ENCODE measurements at regions of chr15 and their contacts with region 1.

Region 1: DNA sequence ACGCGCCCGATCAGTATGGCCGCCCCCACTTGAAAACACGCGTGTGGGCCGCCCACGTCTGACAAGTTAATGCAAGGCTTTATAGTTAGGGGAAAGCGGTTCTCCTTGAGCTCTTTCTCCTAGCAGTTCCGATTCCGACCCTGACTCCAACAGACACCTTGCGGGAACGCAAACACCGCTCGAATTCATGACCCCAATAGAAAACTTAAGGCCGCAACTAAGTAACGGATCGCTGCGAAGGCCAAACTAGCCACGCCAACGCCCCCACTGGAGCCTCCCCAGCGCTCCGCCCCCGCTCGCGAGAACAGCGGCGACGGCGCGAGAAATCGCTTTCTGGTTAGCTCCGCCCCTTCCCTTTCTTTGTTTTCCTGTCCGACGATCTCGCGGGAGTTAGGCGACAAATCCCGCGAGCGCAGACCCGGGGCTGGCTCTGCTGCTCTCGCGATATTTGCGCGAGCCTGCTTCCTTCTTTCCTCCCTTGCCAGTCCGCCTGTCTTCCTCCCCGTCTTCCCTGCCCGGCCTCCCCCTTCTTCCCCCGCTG is at the start of gene IREB2:
- DNase-seq: peak; percentile 95 to 97
- H3K4me3 ChIP-seq: peak within 1 kb of the TSS; percentile 99
- H3K4me3 Mint-ChIP-seq: peak within 1 kb of the TSS; percentile 76
- H3K27ac Mint-ChIP-seq: peak within 1 kb of the TSS; percentile 4
- H3K4me1 ChIP-seq: peaks cover 18% of the 10 kb centered on the region
- H3K4me1 Mint-ChIP-seq: no peaks in the 10 kb centered on the region
- H3K27me3 ChIP-seq: no peaks in the 10 kb centered on the region
- H3K27me3 Mint-ChIP-seq: no peaks in the 10 kb centered on the region
- CTCF ChIP-seq: no peak
- total RNA-seq, gene IREB2: 77.6 and 82.9 TPM in 2 replicates

Region 2: DNA sequence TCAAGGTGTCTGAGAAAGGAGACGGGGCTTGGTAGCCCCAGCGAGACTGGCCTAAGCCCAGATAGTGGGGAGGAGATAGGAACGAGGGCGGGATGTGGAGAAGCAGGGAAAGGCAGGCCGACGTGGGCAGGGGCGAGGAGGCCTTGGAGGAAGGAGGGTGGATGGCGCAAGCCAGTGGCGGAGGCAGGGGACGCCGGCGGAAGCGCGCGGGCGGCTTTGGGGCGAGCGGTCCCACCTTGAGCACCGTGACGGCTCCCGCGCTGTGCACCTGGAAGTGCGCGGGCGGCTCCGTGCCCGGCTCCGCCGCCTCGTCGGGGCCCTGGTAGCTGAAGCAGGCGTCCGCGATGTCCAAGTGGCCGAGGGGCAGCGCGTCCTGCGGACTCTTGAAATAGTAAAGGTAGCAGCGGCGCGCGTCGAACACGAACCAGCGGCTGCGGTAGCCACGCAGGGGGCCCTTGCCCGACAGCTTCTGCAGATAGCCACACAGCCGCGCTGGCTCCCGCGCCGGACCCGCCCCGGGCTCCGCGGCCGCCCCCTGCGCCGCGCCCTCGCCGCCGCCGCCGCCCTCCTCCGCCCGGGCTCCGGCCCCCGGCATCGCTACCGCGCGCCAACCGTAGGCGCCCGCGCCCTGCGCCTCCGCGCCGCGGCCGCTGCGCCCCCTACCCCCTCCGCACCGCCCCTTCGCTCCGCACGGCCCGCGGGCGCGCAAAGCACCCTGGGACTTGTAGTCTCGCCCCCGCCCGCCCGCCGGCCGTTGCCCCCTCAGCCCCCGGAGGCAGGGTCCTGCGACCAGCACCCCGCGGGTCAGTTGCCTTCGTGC is 360.6 kb before region 1 on chr15 and contains the start of gene TBC1D2B:
- CTCF ChIA-PET with region 1: no interaction called
- POLR2A ChIA-PET with region 1: no interaction called
- intact Hi-C with region 1: no loop called
- DNase-seq: peak; percentile 57 to 72
- H3K4me3 ChIP-seq: peak within 1 kb of the TSS; percentile 82
- H3K4me3 Mint-ChIP-seq: peak within 1 kb of the TSS; percentile 89
- H3K27ac Mint-ChIP-seq: peak within 1 kb of the TSS; percentile 85
- H3K4me1 ChIP-seq: peaks cover 9% of the 10 kb centered on the region; the same call in 1 of the 2 replicates
- H3K4me1 Mint-ChIP-seq: peaks cover 8% of the 10 kb centered on the region
- H3K27me3 ChIP-seq: no peaks in the 10 kb centered on the region
- H3K27me3 Mint-ChIP-seq: no peaks in the 10 kb centered on the region
- CTCF ChIP-seq: no peak
- total RNA-seq, gene TBC1D2B: 18.3 and 19.1 TPM in 2 replicates

Region 3: DNA sequence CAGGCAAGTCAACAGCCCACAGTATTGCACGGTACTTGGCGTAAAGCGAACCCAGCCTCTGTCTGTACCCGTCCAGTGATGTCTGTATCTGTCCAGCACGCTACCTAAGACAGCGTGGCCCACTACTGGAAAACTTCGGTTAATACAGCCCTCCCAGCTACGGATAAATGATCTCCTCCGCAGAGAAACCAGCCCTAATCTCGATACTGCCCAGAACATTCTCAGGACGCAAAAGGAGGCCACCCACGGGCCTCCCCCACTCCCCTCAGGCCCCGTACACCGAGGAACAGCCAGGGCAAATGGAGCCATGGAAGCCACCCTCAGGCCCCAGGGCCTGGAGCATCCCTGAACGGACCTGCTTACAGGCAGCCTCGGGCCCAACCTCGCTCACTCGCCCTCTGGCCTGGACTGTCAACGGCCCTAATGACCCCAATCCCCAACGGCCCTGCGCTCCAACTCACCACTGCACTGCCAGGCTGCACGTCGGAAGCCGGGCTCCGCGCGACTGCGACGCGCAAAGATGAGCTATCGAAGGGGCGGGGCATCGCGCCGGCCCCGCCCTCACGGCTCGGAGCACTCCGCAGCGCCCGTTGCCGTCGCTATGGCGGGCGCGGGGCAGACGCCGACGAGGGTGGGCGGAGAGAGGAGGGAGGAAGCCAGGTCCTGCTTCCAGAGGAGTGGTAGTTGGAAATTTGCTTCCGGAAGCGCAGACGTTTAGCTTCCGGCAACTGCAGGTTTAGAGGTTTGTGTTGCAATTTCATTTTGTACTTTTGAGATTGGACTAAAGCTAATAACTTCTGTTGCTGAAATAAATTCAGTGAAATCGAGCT is 138.5 kb before region 1 on chr15 and contains the start of gene SKIC8:
- CTCF ChIA-PET with region 1: interaction called, 8 read pairs
- POLR2A ChIA-PET with region 1: interaction called, 11 read pairs
- intact Hi-C with region 1: no loop called
- DNase-seq: peak; percentile 94
- H3K4me3 ChIP-seq: peak within 1 kb of the TSS; percentile 86
- H3K4me3 Mint-ChIP-seq: peak within 1 kb of the TSS; percentile 100
- H3K27ac Mint-ChIP-seq: peak within 1 kb of the TSS; percentile 98
- H3K4me1 ChIP-seq: 0 out of 2 replicates have a peak, but pooled peaks cover 4% of the 10 kb centered on the region
- H3K4me1 Mint-ChIP-seq: no peaks in the 10 kb centered on the region
- H3K27me3 ChIP-seq: no peaks in the 10 kb centered on the region
- H3K27me3 Mint-ChIP-seq: no peaks in the 10 kb centered on the region
- CTCF ChIP-seq: no peak
- total RNA-seq, gene SKIC8: 45.7 and 51.5 TPM in 2 replicates

Region 4: DNA sequence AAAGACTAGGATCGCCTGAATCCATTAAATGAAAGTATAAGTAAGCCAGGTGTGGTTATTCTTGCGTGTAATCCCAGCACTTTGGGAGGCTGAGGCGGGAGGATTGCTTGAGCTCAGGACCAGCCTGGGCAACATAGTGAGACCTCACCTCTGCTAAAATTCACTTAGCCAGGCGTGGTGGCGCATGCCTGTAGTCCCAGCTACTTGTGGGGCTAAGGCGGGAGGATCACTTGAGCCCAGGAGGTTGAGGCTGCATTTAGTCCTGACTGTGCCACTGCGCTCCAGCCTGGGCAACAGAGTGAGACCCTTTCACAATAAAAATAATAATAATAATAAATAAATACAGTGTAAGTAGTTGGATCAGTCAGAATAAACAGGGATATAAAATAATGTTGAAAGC is 44.1 kb after region 1 on chr15:
- CTCF ChIA-PET with region 1: no interaction called
- POLR2A ChIA-PET with region 1: no interaction called
- intact Hi-C with region 1: loop called (anchors 2 kb)
- DNase-seq: no peak
- H3K4me3 ChIP-seq: no peak overlapping the region
- H3K4me3 Mint-ChIP-seq: no peak overlapping the region
- H3K27ac Mint-ChIP-seq: no peak overlapping the region
- H3K4me1 ChIP-seq: no peaks in the 10 kb centered on the region
- H3K4me1 Mint-ChIP-seq: no peaks in the 10 kb centered on the region
- H3K27me3 ChIP-seq: no peaks in the 10 kb centered on the region
- H3K27me3 Mint-ChIP-seq: no peaks in the 10 kb centered on the region
- CTCF ChIP-seq: no peak